Transverse colon (tissue), 4 donors: ENCODE measurements at regions of chr17 and their contacts with region 1.

Region 1: GRCh38 chr17:40168262-40168832 is 8.9 kb upstream of the RAPGEFL1 start:
- DNase-seq: no peak
- H3K4me3 ChIP-seq: no peak overlapping the region
- H3K27ac ChIP-seq: peak overlapping the region; percentile 50 to 66 (median 56)
- H3K4me1 ChIP-seq: peaks cover 0 to 7% (median 3%) of the 10 kb centered on the region in 4 donors
- H3K27me3 ChIP-seq: no peaks in the 10 kb centered on the region
- CTCF ChIP-seq: peak; percentile 77 to 92 (median 80)
- EP300 ChIP-seq: no peak
- POLR2A ChIP-seq: no peak

Region 2: DNA sequence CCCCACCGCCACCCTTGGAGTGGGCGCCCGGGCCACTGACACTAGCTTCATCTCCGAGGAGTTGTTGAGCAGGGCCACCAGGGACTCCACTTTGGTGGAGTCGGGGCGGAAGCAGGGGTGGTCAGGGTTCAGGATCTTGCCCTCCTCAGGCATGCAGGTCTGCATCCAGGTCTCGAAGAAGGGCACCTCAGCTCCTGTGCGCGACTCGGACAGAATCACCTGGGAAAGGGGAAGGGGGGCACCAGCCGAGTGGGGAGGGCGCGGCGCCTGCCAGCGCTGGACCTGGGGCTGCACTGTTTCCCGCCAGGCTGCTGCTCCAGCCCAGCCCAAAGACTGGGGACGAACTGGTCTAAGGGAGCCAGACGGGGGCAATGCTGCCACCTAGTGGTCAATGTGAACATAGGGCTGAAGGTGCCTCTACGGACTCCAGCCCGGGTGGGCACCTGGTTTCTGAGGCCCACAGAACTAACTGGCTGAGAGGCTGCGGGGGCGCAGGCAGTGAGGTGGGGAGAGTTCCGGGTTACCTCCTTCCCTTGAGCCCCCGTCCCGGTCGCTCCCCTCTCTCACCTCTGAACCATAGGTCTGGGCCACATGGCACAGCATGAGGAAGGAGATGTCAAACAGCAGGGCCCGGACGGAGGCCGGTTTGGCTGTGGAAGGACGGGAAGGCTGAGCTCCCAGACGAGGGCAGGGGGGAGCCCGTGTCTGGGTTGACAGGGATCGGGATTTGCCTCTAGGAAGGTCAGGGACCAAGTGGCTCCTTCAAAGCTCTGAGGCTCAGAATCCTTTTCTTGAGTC is 141.3 kb before region 1 on chr17:
- in situ Hi-C with region 1: loop called in 2 of 4 experiments (anchors 25 kb)
- intact Hi-C with region 1: no loop called
- DNase-seq: peak; percentile 88
- H3K4me3 ChIP-seq: no peak overlapping the region
- H3K27ac ChIP-seq: peak overlapping the region in 1 of 4 donors; percentile 80
- H3K4me1 ChIP-seq: peaks cover 10 to 51% (median 49%) of the 10 kb centered on the region in 4 donors
- H3K27me3 ChIP-seq: no peaks in the 10 kb centered on the region
- CTCF ChIP-seq: peak; percentile 92 to 96 (median 94)
- EP300 ChIP-seq: no peak
- POLR2A ChIP-seq: no peak

Region 3: GRCh38 chr17:40041196-40041595 is 127.2 kb before region 1 on chr17:
- in situ Hi-C with region 1: loop called in 3 of 4 experiments (anchors 10 to 25 kb)
- intact Hi-C with region 1: no loop called
- DNase-seq: no peak
- H3K4me3 ChIP-seq: no peak overlapping the region
- H3K27ac ChIP-seq: no peak overlapping the region
- H3K4me1 ChIP-seq: peaks cover 0 to 24% (median 9%) of the 10 kb centered on the region in 4 donors
- H3K27me3 ChIP-seq: no peaks in the 10 kb centered on the region
- CTCF ChIP-seq: no peak
- EP300 ChIP-seq: no peak
- POLR2A ChIP-seq: no peak

Region 4: GRCh38 chr17:40113110-40113906 is 55.0 kb before region 1 on chr17:
- in situ Hi-C with region 1: loop called in 1 of 4 experiments (anchors 10 kb)
- intact Hi-C with region 1: loop called (anchors 10 kb)
- DNase-seq: peak; percentile 97
- H3K4me3 ChIP-seq: peak overlapping the region; percentile 13 to 55 (median 25)
- H3K27ac ChIP-seq: peak overlapping the region; percentile 93 to 99 (median 96)
- H3K4me1 ChIP-seq: peaks cover 55 to 73% (median 64%) of the 10 kb centered on the region in 4 donors
- H3K27me3 ChIP-seq: no peaks in the 10 kb centered on the region
- CTCF ChIP-seq: peak; percentile 80 to 98 (median 83)
- EP300 ChIP-seq: no peak
- POLR2A ChIP-seq: peak; percentile 66